ENCODE measurements at regions of chr7 and their contacts with region 1.

Region 1: GRCh38 chr7:1503816-1504775 is at the start of gene INTS1:
- DNase-seq: peak; percentile 97
- H3K4me3 ChIP-seq: peak within 1 kb of the TSS; percentile 95 to 100 (median 98)
- H3K27ac ChIP-seq: peak within 1 kb of the TSS; percentile 71 to 82 (median 74)
- H3K4me1 ChIP-seq: peaks cover 20 to 41% (median 39%) of the 10 kb centered on the region in 4 donors
- H3K27me3 ChIP-seq: no peaks in the 10 kb centered on the region
- CTCF ChIP-seq: peak; percentile 98 to 99 (median 98)
- EP300 ChIP-seq: no peak
- POLR2A ChIP-seq: no peak
- total RNA-seq, gene INTS1: 33.1 to 80.3 (median 48.0) TPM

Region 2: DNA sequence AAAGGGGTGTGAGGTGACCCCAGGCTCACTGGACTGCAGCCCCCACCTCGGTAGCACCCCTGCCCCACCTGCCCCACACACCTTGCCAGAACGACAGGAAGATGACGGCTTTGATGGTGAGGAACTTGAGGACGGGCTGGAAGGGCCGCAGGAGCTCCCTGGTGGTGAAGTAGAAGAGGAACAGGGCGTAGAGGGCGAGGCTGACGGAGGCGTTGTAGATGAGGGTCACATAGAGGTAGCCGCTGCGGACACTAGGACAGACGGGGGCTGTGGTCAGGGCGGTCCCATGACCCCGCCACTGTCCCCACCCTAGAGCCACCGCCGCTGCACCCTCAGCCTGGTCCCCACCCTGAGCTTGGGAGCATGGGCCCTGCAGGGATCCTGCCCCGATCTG is 44.3 kb after region 1 on chr7:
- intact Hi-C with region 1: no loop called
- DNase-seq: no peak
- H3K4me3 ChIP-seq: no peak overlapping the region
- H3K27ac ChIP-seq: no peak overlapping the region
- H3K4me1 ChIP-seq: peaks cover 0 to 8% (median 6%) of the 10 kb centered on the region in 4 donors
- H3K27me3 ChIP-seq: no peaks in the 10 kb centered on the region
- CTCF ChIP-seq: no peak
- EP300 ChIP-seq: no peak
- POLR2A ChIP-seq: no peak

Region 3: GRCh38 chr7:1569833-1570633 is 65.9 kb after region 1 on chr7 and contains the start of gene PSMG3:
- intact Hi-C with region 1: loop called (anchors 5 kb)
- DNase-seq: peak; percentile 97
- H3K4me3 ChIP-seq: peak within 1 kb of the TSS; percentile 82 to 94 (median 83)
- H3K27ac ChIP-seq: peak within 1 kb of the TSS; percentile 92 to 99 (median 94)
- H3K4me1 ChIP-seq: peaks cover 21 to 41% (median 34%) of the 10 kb centered on the region in 4 donors
- H3K27me3 ChIP-seq: no peaks in the 10 kb centered on the region
- CTCF ChIP-seq: peak in 2 of 3 experiments; percentile 39 to 50
- EP300 ChIP-seq: no peak
- POLR2A ChIP-seq: peak; percentile 39
- total RNA-seq, gene PSMG3: 26.8 to 33.2 (median 29.3) TPM

Region 4: GRCh38 chr7:1587125-1587592 is 83.1 kb after region 1 on chr7:
- intact Hi-C with region 1: no loop called
- DNase-seq: no peak
- H3K4me3 ChIP-seq: no peak overlapping the region
- H3K27ac ChIP-seq: no peak overlapping the region
- H3K4me1 ChIP-seq: peaks cover 0 to 12% (median 9%) of the 10 kb centered on the region in 4 donors
- H3K27me3 ChIP-seq: peaks cover 0 to 57% (median 9%) of the 10 kb centered on the region in 4 donors
- CTCF ChIP-seq: no peak
- EP300 ChIP-seq: no peak
- POLR2A ChIP-seq: no peak